Motor neuron (in vitro differentiated cells): ENCODE measurements at regions of chr7 and their contacts with region 1.

Region 1: GRCh38 chr7:106153891-106154449 is 41.9 kb upstream of the SYPL1 start:
- ATAC-seq: peak; percentile 91 to 100 (median 98)
- H3K4me3 ChIP-seq: no peak overlapping the region
- H3K27ac ChIP-seq: no peak overlapping the region
- H3K4me1 ChIP-seq: no peaks in the 10 kb centered on the region

Region 2: DNA sequence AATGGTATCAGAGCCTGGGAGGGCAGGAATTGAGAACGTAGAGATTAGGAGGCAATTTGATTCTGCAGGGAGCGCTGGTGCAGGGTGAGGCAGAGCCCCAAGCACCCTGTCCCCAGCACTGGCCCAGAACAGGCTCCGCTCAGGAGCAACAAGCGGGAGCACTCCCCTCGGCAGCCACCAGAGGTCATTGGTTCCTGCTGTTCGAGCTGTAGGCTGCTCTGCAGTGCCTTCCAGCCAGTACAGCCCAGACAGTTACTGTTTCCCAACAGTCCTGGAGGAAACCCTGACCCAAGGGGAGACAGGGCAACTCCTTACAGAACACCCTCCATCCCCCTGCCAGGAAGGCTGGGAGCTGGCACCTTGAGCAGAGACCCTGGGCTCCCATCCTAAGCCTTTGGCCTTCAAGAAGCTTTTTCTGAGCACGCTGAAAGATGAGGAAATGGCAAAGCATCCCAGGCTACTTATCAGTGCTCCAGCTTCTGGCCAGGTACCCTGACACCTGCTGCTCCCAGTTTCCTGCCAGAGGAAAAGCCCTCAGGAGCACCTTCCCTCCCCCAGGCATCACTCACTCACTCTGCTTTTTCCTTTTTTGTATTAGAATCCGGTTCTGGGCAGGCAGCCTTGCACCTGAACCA is 501.5 kb before region 1 on chr7:
- in situ Hi-C with region 1: loop called in 2 of 9 experiments (anchors 10 to 25 kb)
- ATAC-seq: peak; percentile 72 to 89 (median 78)
- H3K4me3 ChIP-seq: no peak overlapping the region
- H3K27ac ChIP-seq: no peak overlapping the region
- H3K4me1 ChIP-seq: peaks cover 36 to 40% of the 10 kb centered on the region in 2 donors

Region 3: DNA sequence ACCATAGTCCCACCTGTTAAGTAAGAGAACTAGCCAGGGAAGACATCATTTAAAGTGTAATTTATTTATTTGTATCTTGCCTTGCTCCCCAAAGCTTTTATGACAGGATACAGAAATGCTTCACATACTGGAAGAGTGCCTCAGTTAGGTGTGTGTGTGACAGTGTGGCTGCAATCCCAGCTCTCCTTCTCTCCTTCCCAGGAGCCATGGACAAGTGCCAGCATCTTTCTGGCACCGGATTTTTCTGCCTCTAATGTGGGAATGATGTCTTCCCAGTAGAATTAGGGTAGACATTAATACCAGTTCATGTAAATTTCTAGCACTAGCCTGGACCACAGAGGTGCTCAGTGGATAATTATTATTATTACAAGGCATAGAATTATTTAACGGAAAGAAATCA is 247.3 kb before region 1 on chr7:
- in situ Hi-C with region 1: no loop called
- ATAC-seq: no peak
- H3K4me3 ChIP-seq: no peak overlapping the region
- H3K27ac ChIP-seq: no peak overlapping the region
- H3K4me1 ChIP-seq: peaks cover 0 to 2% of the 10 kb centered on the region in 2 donors

Region 4: GRCh38 chr7:106056513-106057203 is 97.3 kb before region 1 on chr7:
- in situ Hi-C with region 1: loop called in 3 of 9 experiments (anchors 5 to 10 kb)
- ATAC-seq: peak in 6 of 8 experiments; percentile 17 to 88 (median 62)
- H3K4me3 ChIP-seq: no peak overlapping the region
- H3K27ac ChIP-seq: no peak overlapping the region
- H3K4me1 ChIP-seq: peaks cover 21 to 23% of the 10 kb centered on the region in 2 donors

Region 5: GRCh38 chr7:106064771-106065585 is 89.0 kb before region 1 on chr7:
- in situ Hi-C with region 1: loop called in 1 of 9 experiments (anchors 5 kb)
- ATAC-seq: peak; percentile 88 to 97 (median 95)
- H3K4me3 ChIP-seq: no peak overlapping the region
- H3K27ac ChIP-seq: peak overlapping the region; percentile 79
- H3K4me1 ChIP-seq: peaks cover 43 to 45% of the 10 kb centered on the region in 2 donors

Region 6: DNA sequence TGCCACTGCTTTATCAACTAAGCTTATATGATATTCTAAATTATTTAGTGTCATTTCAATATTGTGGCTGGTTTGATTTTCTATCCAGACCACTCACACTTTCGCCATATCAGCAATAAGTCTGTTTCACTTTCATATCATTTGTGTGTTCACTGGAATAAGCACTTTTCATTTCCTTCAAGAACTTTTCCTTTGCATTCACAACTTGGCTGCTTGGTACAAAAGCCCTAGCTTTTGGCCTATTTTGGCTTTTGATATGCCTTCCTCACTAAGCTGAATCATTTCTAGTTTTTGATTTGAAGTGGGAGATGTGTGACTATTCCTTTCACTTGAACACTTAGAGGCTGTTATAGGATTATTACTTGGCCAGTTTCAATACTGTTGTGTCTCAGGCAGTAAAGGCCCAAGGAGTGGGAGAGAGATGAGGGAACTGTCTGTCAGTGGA is 251.7 kb after region 1 on chr7:
- in situ Hi-C with region 1: no loop called
- ATAC-seq: no peak
- H3K4me3 ChIP-seq: no peak overlapping the region
- H3K27ac ChIP-seq: no peak overlapping the region
- H3K4me1 ChIP-seq: peaks cover 4 to 6% of the 10 kb centered on the region in 2 donors